ENCODE measurements at regions of chr18 and their contacts with region 1.

Region 1: GRCh38 chr18:65753520-65753919 is 2.7 kb downstream of the CDH7 start:
- DNase-seq: peak; percentile 83 to 89 (median 84)
- H3K4me3 ChIP-seq: peak overlapping the region in 2 of 7 experiments; percentile 35 to 48
- H3K27ac ChIP-seq: peak overlapping the region; percentile 30 to 61
- H3K4me1 ChIP-seq: peaks cover 0 to 75% (median 15%) of the 10 kb centered on the region in 4 experiments
- H3K27me3 ChIP-seq: peaks cover 0 to 17% (median 5%) of the 10 kb centered on the region in 5 experiments

Region 2: DNA sequence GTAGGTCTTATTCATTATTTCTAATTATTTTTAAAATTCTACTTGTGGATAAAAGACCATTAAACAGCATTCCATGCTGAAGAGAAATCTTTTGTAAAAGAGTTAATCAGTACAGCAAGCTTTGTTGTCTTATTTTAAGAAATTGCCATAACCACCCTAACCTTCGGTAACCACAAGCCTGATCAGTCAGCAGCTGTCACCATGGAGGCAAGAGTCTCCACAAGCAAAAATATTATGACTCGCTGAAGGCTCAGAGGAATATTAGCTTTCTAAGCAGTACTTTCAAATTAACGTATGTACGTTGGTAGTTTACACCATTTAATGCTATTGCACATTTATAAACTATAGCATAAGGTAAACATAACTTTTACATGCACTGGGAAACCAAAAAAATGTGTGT is 954.1 kb before region 1 on chr18:
- CTCF ChIA-PET with region 1: no interaction called
- POLR2A ChIA-PET with region 1: no interaction called
- DNase-seq: no peak
- H3K4me3 ChIP-seq: no peak overlapping the region
- H3K27ac ChIP-seq: no peak overlapping the region
- H3K4me1 ChIP-seq: no peaks in the 10 kb centered on the region
- H3K27me3 ChIP-seq: no peaks in the 10 kb centered on the region

Region 3: DNA sequence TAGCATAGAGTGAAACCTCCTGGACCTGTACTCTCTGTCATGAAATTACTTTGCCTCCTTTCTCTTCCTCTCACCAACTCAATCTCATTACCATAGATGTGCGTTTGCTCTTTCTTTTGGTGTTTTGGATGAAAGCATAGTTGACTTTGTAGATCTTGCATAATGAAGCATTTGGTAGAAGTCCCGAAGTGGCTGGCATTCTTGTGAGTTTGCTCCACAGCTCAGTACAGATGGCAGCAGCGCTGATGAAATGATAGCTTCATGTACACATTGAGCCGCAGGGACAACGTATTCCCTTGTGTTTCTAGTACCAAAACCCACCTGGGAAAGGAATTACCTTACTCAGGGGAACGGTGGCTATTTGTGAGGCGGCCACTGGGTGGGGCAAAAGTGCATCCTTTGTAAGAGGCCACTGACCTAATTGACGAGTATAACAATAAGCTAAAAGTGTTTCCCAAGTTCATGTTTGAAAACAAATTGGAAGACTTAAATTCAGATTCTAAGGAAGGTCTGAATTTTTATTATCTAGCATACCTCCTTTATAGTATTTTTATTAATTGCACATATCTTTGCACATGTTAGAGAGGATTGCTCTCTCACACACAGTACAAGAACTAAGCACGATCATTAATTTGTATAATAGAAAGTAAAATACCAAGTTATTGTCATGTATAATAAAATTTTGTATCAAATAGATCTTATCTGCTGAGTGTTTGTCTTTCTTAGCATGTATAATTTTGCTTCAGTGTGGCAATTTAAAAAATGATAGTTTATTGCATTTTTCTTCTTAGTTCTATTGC is 28.1 kb before region 1 on chr18:
- CTCF ChIA-PET with region 1: interaction called, 15 read pairs
- POLR2A ChIA-PET with region 1: no interaction called
- DNase-seq: peak; percentile 38 to 63 (median 58)
- H3K4me3 ChIP-seq: peak overlapping the region in 1 of 7 experiments; percentile 29
- H3K27ac ChIP-seq: no peak overlapping the region
- H3K4me1 ChIP-seq: peaks cover 0 to 5% (median 0%) of the 10 kb centered on the region in 4 experiments
- H3K27me3 ChIP-seq: no peaks in the 10 kb centered on the region

Region 4: GRCh38 chr18:65938592-65939372 is 185.3 kb after region 1 on chr18:
- CTCF ChIA-PET with region 1: no interaction called
- POLR2A ChIA-PET with region 1: no interaction called
- DNase-seq: peak; percentile 21 to 62 (median 60)
- H3K4me3 ChIP-seq: no peak overlapping the region
- H3K27ac ChIP-seq: no peak overlapping the region
- H3K4me1 ChIP-seq: no peaks in the 10 kb centered on the region
- H3K27me3 ChIP-seq: no peaks in the 10 kb centered on the region

Measured in common myeloid progenitor, CD34-positive (primary cell).